IMR-90 (cell line): ENCODE measurements at regions of chr11 and their contacts with region 1.

Region 1: DNA sequence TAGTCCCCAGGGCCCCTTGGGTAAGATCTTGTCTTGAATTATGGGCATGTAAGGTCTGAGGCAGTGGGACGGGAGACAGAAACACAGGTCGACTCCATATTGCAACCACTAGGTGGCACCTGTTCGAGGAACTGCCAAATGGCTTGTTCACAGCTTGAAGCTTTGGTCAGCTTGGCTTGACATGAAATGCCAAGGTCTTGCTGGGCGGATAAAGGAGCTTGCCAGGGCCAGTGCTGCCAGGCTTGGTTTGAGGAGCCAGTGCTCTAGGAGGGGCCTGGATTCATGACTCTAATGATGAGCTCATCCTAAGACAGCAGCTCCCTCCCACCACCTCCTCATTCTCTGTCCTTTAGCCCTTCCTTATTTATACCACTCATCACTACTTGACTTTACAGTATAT is 11.9 kb upstream of the NRIP3 start:
- DNase-seq: peak; percentile 78
- ATAC-seq: peak; percentile 93
- H3K4me3 ChIP-seq: no peak overlapping the region
- H3K27ac ChIP-seq: no peak overlapping the region
- H3K4me1 ChIP-seq: no peaks in the 10 kb centered on the region
- H3K27me3 ChIP-seq: no peaks in the 10 kb centered on the region
- CTCF ChIP-seq: peak; percentile 64
- POLR2A ChIP-seq: no peak
- RAD21 ChIP-seq: peak; percentile 64

Region 2: GRCh38 chr11:9130297-9130696 is 114.6 kb after region 1 on chr11:
- CTCF ChIA-PET with region 1: no interaction called
- POLR2A ChIA-PET with region 1: no interaction called
- dilution Hi-C with region 1: no loop called
- in situ Hi-C with region 1: loop called (anchors 5 kb)
- intact Hi-C with region 1: no loop called
- DNase-seq: no peak
- ATAC-seq: no peak
- H3K4me3 ChIP-seq: no peak overlapping the region
- H3K27ac ChIP-seq: no peak overlapping the region
- H3K4me1 ChIP-seq: no peaks in the 10 kb centered on the region
- H3K27me3 ChIP-seq: no peaks in the 10 kb centered on the region
- CTCF ChIP-seq: no peak
- POLR2A ChIP-seq: no peak
- RAD21 ChIP-seq: no peak

Region 3: GRCh38 chr11:9347100-9347499 is 331.4 kb after region 1 on chr11:
- CTCF ChIA-PET with region 1: no interaction called
- POLR2A ChIA-PET with region 1: no interaction called
- dilution Hi-C with region 1: no loop called
- in situ Hi-C with region 1: no loop called
- intact Hi-C with region 1: no loop called
- DNase-seq: no peak
- ATAC-seq: no peak
- H3K4me3 ChIP-seq: no peak overlapping the region
- H3K27ac ChIP-seq: no peak overlapping the region
- H3K4me1 ChIP-seq: no peaks in the 10 kb centered on the region
- H3K27me3 ChIP-seq: no peaks in the 10 kb centered on the region; the same call in none of the 2 replicates
- CTCF ChIP-seq: no peak
- POLR2A ChIP-seq: no peak
- RAD21 ChIP-seq: no peak

Region 4: DNA sequence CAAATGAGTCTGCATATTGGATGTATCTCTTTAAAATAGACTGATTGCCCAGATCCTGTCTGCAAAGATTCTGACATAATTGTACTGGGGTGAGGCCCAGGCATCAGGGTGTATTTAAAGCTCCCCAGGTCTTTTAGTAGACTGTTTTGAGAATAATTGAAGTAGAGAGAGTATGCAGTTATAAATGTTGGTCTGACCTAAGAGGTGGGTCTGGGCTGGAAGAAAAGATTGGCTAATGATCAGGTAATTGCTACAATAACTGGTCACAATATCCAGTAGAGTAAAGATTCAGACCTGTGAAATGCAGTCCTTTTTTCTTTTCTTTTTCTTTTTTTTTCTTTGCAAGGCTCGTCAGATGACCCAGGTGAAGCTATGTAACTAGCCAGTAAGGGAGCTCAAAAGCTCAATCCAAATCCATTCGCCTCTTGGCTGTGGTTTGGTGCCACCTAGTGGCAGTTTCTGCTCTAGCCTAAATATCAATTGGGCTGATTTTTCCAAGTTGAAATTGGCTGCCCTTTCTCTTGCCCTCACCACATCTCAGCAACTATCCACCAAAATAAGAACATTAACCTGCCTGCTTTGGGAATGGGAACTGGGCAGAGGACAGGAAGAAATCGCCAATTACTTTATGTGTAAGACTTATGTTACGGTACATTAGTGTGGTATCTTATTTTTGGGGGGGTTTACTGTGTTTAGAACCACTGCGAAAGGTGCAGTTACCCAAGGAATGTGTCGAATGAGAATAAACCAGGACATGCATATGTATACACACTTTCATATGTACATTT is 491.0 kb after region 1 on chr11:
- CTCF ChIA-PET with region 1: no interaction called
- POLR2A ChIA-PET with region 1: no interaction called
- dilution Hi-C with region 1: no loop called
- in situ Hi-C with region 1: loop called (anchors 25 kb)
- intact Hi-C with region 1: no loop called
- DNase-seq: peak; percentile 81
- ATAC-seq: peak; percentile 90
- H3K4me3 ChIP-seq: no peak overlapping the region
- H3K27ac ChIP-seq: no peak overlapping the region
- H3K4me1 ChIP-seq: peaks cover 4% of the 10 kb centered on the region
- H3K27me3 ChIP-seq: no peaks in the 10 kb centered on the region
- CTCF ChIP-seq: peak; percentile 95
- POLR2A ChIP-seq: no peak
- RAD21 ChIP-seq: peak; percentile 95